Heart left ventricle (tissue), 16 donors: ENCODE measurements at regions of chr3 and their contacts with region 1.

Region 1: GRCh38 chr3:101635954-101636798 is 40.8 kb downstream of the ZBTB11 start:
- DNase-seq: peak in 4 of 5 donors; percentile 45 to 57 (median 54)
- ATAC-seq: peak; percentile 67 to 84 (median 83)
- H3K4me3 ChIP-seq: no peak overlapping the region
- H3K27ac ChIP-seq: no peak overlapping the region
- H3K4me1 ChIP-seq: peaks cover 0 to 7% (median 0%) of the 10 kb centered on the region in 12 donors
- H3K27me3 ChIP-seq: no peaks in the 10 kb centered on the region
- CTCF ChIP-seq: peak; percentile 33 to 70 (median 60)
- POLR2A ChIP-seq: no peak

Region 2: GRCh38 chr3:101588616-101589015 is 47.6 kb before region 1 on chr3:
- intact Hi-C with region 1: loop called in 1 of 10 experiments (anchors 10 kb)
- DNase-seq: no peak
- ATAC-seq: no peak
- H3K4me3 ChIP-seq: no peak overlapping the region
- H3K27ac ChIP-seq: no peak overlapping the region
- H3K4me1 ChIP-seq: peaks cover 0 to 10% (median 4%) of the 10 kb centered on the region in 12 donors
- H3K27me3 ChIP-seq: no peaks in the 10 kb centered on the region
- CTCF ChIP-seq: no peak
- POLR2A ChIP-seq: no peak